ENCODE measurements at regions of chr20 and their contacts with region 1.

Region 1: GRCh38 chr20:49888345-49888966 is 26.9 kb downstream of the SPATA2 start:
- DNase-seq: peak; percentile 76 to 84
- H3K4me3 ChIP-seq: no peak overlapping the region
- H3K4me3 Mint-ChIP-seq: no peak overlapping the region
- H3K27ac Mint-ChIP-seq: peak overlapping the region; percentile 14
- H3K4me1 ChIP-seq: no peaks in the 10 kb centered on the region
- H3K4me1 Mint-ChIP-seq: peaks cover 15% of the 10 kb centered on the region
- H3K27me3 ChIP-seq: no peaks in the 10 kb centered on the region
- H3K27me3 Mint-ChIP-seq: no peaks in the 10 kb centered on the region
- CTCF ChIP-seq: peak; percentile 98 to 99

Region 2: DNA sequence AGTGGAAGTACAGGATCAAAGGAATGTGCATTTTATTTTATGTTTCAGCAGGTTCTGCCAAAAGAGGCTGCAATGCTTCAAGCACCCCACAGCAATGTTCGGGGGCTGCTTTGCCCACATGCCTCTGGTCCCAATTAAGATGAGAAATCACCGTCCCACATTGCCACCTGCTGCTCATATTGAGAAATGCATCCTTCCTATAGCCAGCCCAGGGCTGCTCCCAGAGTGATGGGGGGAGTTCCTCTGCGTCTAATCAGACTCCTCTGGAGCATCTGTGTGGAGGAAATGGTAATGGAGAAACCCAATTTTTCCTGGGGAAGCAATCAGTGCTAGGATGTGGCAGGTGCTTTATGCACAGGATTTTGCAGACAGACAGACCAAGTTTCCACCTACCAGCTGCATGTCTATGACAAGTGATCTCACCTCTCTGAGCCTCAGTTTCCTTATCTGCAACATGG is 354.2 kb before region 1 on chr20:
- CTCF ChIA-PET with region 1: interaction called, 3 read pairs
- POLR2A ChIA-PET with region 1: no interaction called
- intact Hi-C with region 1: loop called (anchors 1 kb)
- DNase-seq: peak; percentile 81 to 88
- H3K4me3 ChIP-seq: no peak overlapping the region
- H3K4me3 Mint-ChIP-seq: no peak overlapping the region
- H3K27ac Mint-ChIP-seq: no peak overlapping the region
- H3K4me1 ChIP-seq: no peaks in the 10 kb centered on the region
- H3K4me1 Mint-ChIP-seq: no peaks in the 10 kb centered on the region
- H3K27me3 ChIP-seq: no peaks in the 10 kb centered on the region
- H3K27me3 Mint-ChIP-seq: peaks cover 4% of the 10 kb centered on the region
- CTCF ChIP-seq: peak; percentile 93 to 99

Region 3: DNA sequence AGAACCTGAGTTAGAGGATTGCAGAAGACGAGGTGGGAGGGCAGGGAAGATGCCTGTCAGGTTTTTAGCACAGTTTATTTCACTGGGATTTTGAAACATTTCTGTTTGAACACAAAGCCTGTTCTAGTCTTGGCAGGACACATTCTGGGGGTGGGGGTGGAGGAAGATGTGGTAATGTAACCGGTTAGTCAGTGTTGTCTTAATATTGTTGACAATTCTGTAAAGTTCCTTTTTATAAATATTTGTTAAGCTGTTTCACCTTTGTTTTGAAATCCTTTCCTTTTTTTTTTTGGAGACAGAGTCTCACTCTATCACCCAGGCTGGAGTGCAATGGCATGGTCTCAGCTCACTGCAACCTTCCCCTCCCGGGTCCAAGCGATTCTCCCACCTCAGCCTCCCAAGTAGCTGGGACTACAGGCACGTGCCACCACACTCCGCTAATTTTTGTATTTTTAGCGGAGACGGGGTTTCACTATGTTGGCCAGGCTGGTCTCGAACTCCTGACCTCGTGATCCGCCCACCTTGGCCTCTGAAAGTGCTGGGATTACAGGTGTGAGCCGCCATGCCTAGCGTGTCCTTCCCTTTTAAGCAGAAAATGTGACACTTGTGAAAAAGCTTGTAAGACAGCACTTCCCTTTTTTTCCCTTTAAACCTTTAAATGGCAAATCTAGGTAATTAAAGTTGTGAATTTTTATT is 55.7 kb before region 1 on chr20:
- CTCF ChIA-PET with region 1: no interaction called
- POLR2A ChIA-PET with region 1: no interaction called
- intact Hi-C with region 1: no loop called
- DNase-seq: peak; percentile 63 to 74
- H3K4me3 ChIP-seq: no peak overlapping the region
- H3K4me3 Mint-ChIP-seq: no peak overlapping the region
- H3K27ac Mint-ChIP-seq: peak overlapping the region; percentile 39
- H3K4me1 ChIP-seq: peaks cover 16% of the 10 kb centered on the region; the same call in 1 of the 2 replicates
- H3K4me1 Mint-ChIP-seq: peaks cover 30% of the 10 kb centered on the region
- H3K27me3 ChIP-seq: no peaks in the 10 kb centered on the region
- H3K27me3 Mint-ChIP-seq: no peaks in the 10 kb centered on the region
- CTCF ChIP-seq: no peak